Activated CD8-positive, alpha-beta memory T cell treated with anti-CD3 and anti-CD28 coated beads, Interleukin-2, amount 10 ng/mL, durations not matched to agents 7 days and 5 days (primary cell): ENCODE measurements at regions of chr1 and their contacts with region 1.

Region 1: GRCh38 chr1:25099343-25099951 is 132.9 kb downstream of the SYF2 start:
- DNase-seq: peak; percentile 92
- ATAC-seq: peak; percentile 60
- H3K4me3 Mint-ChIP-seq: peak overlapping the region; percentile 65
- H3K27ac Mint-ChIP-seq: peak overlapping the region; percentile 81
- H3K4me1 Mint-ChIP-seq: peaks cover 73% of the 10 kb centered on the region
- H3K27me3 Mint-ChIP-seq: peaks cover 27% of the 10 kb centered on the region

Region 2: DNA sequence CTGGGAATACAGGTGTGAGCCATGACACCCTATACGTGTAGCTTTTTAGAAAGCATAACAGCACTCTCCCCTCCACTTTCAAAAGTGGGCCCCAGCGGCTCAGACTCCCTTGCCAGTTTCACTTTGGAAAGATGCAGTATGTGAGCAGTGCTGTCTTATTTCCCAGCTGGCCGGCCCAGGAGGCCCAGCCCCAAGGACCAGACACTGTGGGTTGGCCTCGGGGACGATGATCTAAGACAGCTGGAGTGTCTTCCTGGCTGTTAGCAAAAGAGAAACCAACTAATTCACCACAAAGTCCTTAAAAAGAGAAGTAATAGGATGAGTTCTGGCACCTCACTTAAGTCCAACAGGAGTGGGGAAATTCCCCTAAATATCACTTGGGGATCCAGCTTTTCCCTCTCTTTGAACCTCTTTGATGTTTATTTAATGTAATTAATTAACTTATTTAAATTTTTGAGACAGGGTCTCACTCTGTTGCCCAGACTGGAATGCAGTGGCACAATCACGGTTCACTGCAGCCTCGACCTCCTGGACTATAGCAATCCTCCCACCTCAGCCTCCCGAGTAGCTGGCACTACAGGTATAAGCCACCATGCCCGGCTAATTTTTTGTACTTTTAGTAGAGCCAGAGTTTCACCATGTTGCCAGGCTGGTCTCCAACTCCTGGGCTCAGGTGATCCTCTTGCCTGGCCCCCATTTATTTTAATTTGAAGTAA is 371.8 kb before region 1 on chr1:
- CTCF ChIA-PET with region 1: no interaction called
- DNase-seq: no peak
- ATAC-seq: peak; percentile 40
- H3K4me3 Mint-ChIP-seq: no peak overlapping the region
- H3K27ac Mint-ChIP-seq: no peak overlapping the region
- H3K4me1 Mint-ChIP-seq: peaks cover 7% of the 10 kb centered on the region
- H3K27me3 Mint-ChIP-seq: peaks cover 19% of the 10 kb centered on the region

Region 3: GRCh38 chr1:24930204-24931145 is 169.0 kb before region 1 on chr1 and contains the start of gene RUNX3:
- CTCF ChIA-PET with region 1: interaction called, 114 read pairs
- DNase-seq: peak; percentile 94
- ATAC-seq: peak; percentile 73
- H3K4me3 Mint-ChIP-seq: peak within 1 kb of the TSS; percentile 80
- H3K27ac Mint-ChIP-seq: peak within 1 kb of the TSS; percentile 90
- H3K4me1 Mint-ChIP-seq: peaks cover 72% of the 10 kb centered on the region
- H3K27me3 Mint-ChIP-seq: no peaks in the 10 kb centered on the region
- total RNA-seq, gene RUNX3: 224 to 246 TPM

Region 4: DNA sequence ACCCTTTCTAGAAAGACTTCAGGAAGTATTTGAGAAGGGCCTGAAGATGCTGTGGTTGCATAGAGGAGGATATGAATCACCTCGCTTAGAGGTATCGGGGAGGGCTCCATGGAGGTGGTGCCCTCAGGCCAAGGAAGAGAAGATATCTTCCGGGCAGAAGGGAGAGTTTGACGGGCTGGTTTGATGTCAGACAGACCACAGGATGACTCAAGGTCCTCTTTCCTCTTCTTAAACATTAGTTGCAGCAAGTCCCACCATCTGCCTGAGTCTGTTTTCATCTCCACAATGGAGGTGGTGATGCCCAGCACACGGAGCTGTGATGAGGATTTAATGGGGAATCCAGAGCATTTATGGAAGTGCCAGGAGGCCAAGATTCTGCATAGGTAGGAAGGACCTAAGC is 144.3 kb before region 1 on chr1:
- CTCF ChIA-PET with region 1: interaction called, 68 read pairs
- DNase-seq: peak; percentile 94
- ATAC-seq: peak; percentile 77
- H3K4me3 Mint-ChIP-seq: peak overlapping the region; percentile 77
- H3K27ac Mint-ChIP-seq: peak overlapping the region; percentile 92
- H3K4me1 Mint-ChIP-seq: peaks cover 93% of the 10 kb centered on the region
- H3K27me3 Mint-ChIP-seq: no peaks in the 10 kb centered on the region

Region 5: GRCh38 chr1:24964811-24965570 is 134.5 kb before region 1 on chr1:
- CTCF ChIA-PET with region 1: interaction called, 68 read pairs
- DNase-seq: peak; percentile 99
- ATAC-seq: peak; percentile 70
- H3K4me3 Mint-ChIP-seq: peak overlapping the region; percentile 89
- H3K27ac Mint-ChIP-seq: peak overlapping the region; percentile 92
- H3K4me1 Mint-ChIP-seq: peaks cover 56% of the 10 kb centered on the region
- H3K27me3 Mint-ChIP-seq: no peaks in the 10 kb centered on the region

Region 6: DNA sequence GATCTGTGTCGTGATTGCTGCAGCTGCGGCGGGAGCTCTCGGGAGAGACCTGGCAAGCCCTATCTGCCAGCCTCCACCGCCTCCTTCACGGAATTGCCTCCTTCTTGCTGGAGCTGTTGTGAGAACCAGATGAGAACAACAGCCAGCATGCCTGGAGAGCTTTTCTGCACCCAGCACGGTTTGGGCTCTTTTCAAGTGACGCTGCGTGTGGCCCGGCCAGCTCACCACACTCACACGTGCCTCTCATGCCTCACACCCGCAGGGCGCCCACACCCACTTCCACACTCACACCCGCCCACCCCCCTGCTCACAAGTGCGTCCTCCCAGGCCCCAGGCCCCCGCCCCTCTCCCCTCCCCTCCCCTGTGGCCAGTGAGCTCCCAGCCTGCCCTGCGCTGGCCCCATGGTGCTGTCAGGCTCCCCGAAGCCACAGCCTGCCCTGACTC is 33.6 kb before region 1 on chr1:
- CTCF ChIA-PET with region 1: interaction called, 24 read pairs
- DNase-seq: peak; percentile 59
- ATAC-seq: peak; percentile 49
- H3K4me3 Mint-ChIP-seq: no peak overlapping the region
- H3K27ac Mint-ChIP-seq: peak overlapping the region; percentile 72
- H3K4me1 Mint-ChIP-seq: peaks cover 35% of the 10 kb centered on the region
- H3K27me3 Mint-ChIP-seq: peaks cover 30% of the 10 kb centered on the region

Region 7: DNA sequence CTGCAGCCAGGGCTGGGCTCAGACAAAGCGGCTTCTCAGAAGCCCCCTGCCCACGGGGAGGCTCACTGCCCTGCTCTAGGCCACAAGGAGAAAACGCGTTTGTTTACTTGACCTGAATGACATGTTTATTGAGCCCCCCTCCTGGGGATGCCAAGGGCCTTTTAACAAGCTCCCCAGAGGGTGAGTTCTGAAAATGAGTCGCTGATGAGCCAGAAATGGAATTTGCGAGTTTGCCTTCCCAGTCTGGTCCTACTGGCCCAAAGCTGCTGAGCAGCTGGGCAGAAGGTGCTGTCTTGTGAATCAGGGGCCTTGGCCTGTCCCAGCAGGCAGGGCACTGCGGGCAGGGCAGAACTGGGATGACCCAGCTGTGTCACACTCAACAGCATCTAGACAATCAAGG is 12.3 kb after region 1 on chr1:
- CTCF ChIA-PET with region 1: interaction called, 13 read pairs
- DNase-seq: no peak
- ATAC-seq: no peak
- H3K4me3 Mint-ChIP-seq: no peak overlapping the region
- H3K27ac Mint-ChIP-seq: no peak overlapping the region
- H3K4me1 Mint-ChIP-seq: peaks cover 13% of the 10 kb centered on the region
- H3K27me3 Mint-ChIP-seq: peaks cover 23% of the 10 kb centered on the region